GM10248 (cell line): ENCODE measurements at regions of chr2 and their contacts with region 1.

Region 1: DNA sequence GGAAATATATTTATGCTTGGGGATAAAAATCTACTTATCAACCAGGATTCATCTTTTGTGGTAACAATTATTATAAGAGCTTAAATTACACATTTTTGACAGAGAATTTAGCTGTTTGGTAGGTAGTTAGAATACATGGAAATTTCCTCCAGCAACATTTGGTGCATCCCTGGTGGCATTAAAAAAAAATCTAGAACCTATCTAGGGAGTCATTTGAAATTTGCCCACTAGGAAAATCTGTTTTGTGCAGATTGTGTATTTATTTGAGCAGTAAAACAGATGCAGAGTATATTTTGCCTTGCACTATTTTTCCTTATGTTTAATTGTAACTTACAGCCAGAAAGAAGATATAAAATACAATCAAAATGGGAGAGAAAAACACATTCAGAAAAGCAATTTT is 208.4 kb upstream of the LRP1B start:
- DNase-seq: no peak
- CTCF ChIP-seq: no peak

Region 2: DNA sequence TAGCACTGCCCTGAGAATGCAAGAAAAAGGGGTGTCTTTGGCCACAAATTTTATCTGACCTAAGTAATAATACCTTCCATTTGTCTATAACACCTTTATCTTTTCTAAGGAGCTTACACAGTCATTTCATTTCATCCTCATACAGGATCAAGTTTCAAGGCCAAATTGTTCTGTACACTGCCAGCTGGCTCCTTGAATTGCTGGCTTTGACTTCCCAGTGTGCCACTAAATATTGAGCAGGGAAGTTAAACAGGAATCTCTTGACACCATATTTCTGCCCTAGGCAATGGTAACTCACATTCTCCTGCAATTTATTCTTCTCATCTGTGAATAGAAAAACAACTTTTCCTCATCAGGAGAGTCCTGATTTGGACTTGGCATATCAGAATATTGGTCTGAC is 13.4 kb before region 1 on chr2:
- CTCF ChIA-PET with region 1: interaction called, 10 read pairs
- POLR2A ChIA-PET with region 1: no interaction called
- DNase-seq: no peak
- CTCF ChIP-seq: no peak